Caco-2 (cell line): ENCODE measurements at regions of chr3 and their contacts with region 1.

Region 1: DNA sequence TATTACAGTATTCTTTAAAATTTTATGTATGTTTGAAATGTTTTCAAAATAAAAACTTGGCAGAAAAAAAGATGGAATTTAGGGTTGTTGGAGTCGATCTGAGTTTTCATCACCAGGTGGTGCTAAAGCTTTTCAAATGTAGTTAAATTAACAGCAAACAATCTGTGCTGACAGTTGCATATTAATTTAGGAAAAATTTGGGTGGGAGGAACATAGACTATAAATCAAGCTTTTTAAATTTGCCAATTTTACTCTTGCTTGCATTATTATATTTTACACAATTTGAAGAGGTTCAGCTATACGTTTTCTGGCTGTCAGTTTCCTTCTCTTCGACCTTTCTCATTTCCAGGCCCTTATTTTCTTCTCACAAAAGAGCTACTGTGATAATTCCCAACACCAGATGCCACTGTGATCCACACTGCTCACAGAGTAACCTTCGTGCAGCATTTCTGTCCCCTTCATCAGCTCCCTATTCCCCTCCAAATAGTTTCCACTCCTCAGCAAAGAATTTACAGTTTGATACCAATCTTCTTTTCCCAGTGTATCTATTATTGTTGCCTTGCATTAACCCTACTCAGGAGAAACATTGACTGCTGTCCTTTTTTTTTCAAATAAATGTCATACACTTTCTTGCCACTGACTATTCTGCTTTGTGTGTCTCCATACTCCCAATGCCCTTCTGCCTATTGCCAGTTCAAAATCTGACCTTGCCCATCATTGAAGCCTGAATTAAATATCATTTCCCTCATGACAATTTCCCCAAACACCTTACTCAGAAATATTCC is 53.4 kb upstream of the EIF5A2 start:
- DNase-seq: peak in 1 of 2 experiments; percentile 33
- H3K4me3 ChIP-seq: no peak overlapping the region
- H3K4me3 Mint-ChIP-seq: no peak overlapping the region
- H3K27ac Mint-ChIP-seq: peak overlapping the region; percentile 40
- H3K4me1 ChIP-seq: peaks cover 7% of the 10 kb centered on the region
- H3K4me1 Mint-ChIP-seq: peaks cover 15% of the 10 kb centered on the region
- H3K27me3 ChIP-seq: no peaks in the 10 kb centered on the region
- H3K27me3 Mint-ChIP-seq: no peaks in the 10 kb centered on the region
- CTCF ChIP-seq: peak; percentile 50 to 82

Region 2: DNA sequence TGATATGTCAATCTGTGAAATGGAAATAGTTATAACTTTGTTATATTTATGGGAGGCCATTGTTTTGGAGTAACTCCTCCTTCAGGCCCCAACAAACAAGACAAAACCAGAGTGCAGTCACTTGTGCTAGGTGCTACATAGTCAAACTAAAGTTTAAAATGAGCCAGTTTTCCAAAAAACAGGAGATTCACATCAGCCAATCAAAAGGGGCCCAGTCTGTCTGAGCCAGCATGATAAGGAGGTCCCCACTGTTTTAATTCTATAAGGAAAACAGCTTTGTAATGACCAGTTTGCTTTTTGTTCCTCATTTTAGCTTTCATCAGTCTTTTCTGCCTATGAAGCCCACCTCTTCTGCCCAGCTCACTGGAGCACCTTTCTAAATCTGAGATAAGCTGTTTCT is 281.2 kb before region 1 on chr3:
- CTCF ChIA-PET with region 1: no interaction called
- POLR2A ChIA-PET with region 1: no interaction called
- intact Hi-C with region 1: no loop called
- DNase-seq: no peak
- H3K4me3 ChIP-seq: no peak overlapping the region
- H3K4me3 Mint-ChIP-seq: no peak overlapping the region
- H3K27ac Mint-ChIP-seq: no peak overlapping the region
- H3K4me1 ChIP-seq: no peaks in the 10 kb centered on the region
- H3K4me1 Mint-ChIP-seq: no peaks in the 10 kb centered on the region
- H3K27me3 ChIP-seq: no peaks in the 10 kb centered on the region
- H3K27me3 Mint-ChIP-seq: peaks cover 3% of the 10 kb centered on the region
- CTCF ChIP-seq: no peak

Region 3: GRCh38 chr3:171187706-171188290 is 226.0 kb after region 1 on chr3:
- CTCF ChIA-PET with region 1: interaction called, 7 read pairs
- POLR2A ChIA-PET with region 1: interaction called, 3 read pairs
- intact Hi-C with region 1: loop called (anchors 1 kb)
- DNase-seq: peak in 1 of 2 experiments; percentile 45
- H3K4me3 ChIP-seq: no peak overlapping the region
- H3K4me3 Mint-ChIP-seq: no peak overlapping the region
- H3K27ac Mint-ChIP-seq: no peak overlapping the region
- H3K4me1 ChIP-seq: peaks cover 22% of the 10 kb centered on the region
- H3K4me1 Mint-ChIP-seq: peaks cover 13% of the 10 kb centered on the region
- H3K27me3 ChIP-seq: no peaks in the 10 kb centered on the region
- H3K27me3 Mint-ChIP-seq: no peaks in the 10 kb centered on the region
- CTCF ChIP-seq: peak; percentile 59

Region 4: DNA sequence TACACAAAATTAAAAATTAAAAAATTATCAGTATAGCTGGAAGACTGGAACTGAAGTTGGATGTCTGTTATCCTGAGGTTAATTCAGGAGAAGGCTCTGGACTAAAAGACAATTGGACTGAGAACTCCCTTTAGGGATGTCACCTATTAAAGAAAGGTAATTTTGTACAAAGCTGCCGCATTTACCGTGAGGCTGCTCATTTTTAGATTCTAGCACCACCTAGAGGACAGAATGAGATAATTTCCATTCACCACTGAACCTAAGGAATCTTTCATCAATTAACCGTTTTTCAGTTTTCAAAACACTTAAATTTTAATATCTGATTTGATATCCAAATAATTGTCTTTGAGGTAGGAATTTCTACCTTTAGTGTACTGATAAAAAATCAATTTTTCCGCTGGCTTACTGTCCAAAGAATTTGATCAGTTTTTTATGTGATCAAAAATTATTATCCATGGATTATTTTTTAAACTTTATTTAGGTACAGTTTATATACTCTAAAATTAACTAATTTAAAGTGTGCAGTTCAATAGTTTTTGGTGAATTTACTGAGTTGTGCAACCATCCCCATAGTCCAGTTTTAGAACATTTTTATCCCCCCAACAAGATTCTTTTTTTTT is 605.1 kb after region 1 on chr3:
- CTCF ChIA-PET with region 1: interaction called, 25 read pairs
- POLR2A ChIA-PET with region 1: no interaction called
- intact Hi-C with region 1: loop called (anchors 1 kb)
- DNase-seq: peak in 1 of 2 experiments; percentile 39
- H3K4me3 ChIP-seq: no peak overlapping the region
- H3K4me3 Mint-ChIP-seq: no peak overlapping the region
- H3K27ac Mint-ChIP-seq: no peak overlapping the region
- H3K4me1 ChIP-seq: peaks cover 10% of the 10 kb centered on the region
- H3K4me1 Mint-ChIP-seq: no peaks in the 10 kb centered on the region
- H3K27me3 ChIP-seq: no peaks in the 10 kb centered on the region
- H3K27me3 Mint-ChIP-seq: no peaks in the 10 kb centered on the region
- CTCF ChIP-seq: peak; percentile 70 to 74

Region 5: GRCh38 chr3:171772427-171773056 is 810.7 kb after region 1 on chr3:
- CTCF ChIA-PET with region 1: interaction called, 6 read pairs
- POLR2A ChIA-PET with region 1: no interaction called
- intact Hi-C with region 1: loop called (anchors 5 kb)
- DNase-seq: peak; percentile 57 to 64
- H3K4me3 ChIP-seq: no peak overlapping the region
- H3K4me3 Mint-ChIP-seq: no peak overlapping the region
- H3K27ac Mint-ChIP-seq: no peak overlapping the region
- H3K4me1 ChIP-seq: no peaks in the 10 kb centered on the region
- H3K4me1 Mint-ChIP-seq: peaks cover 9% of the 10 kb centered on the region
- H3K27me3 ChIP-seq: no peaks in the 10 kb centered on the region
- H3K27me3 Mint-ChIP-seq: no peaks in the 10 kb centered on the region
- CTCF ChIP-seq: peak; percentile 66 to 74